T-cell (primary cell): ENCODE measurements at regions of chr14 and their contacts with region 1.

Region 1: DNA sequence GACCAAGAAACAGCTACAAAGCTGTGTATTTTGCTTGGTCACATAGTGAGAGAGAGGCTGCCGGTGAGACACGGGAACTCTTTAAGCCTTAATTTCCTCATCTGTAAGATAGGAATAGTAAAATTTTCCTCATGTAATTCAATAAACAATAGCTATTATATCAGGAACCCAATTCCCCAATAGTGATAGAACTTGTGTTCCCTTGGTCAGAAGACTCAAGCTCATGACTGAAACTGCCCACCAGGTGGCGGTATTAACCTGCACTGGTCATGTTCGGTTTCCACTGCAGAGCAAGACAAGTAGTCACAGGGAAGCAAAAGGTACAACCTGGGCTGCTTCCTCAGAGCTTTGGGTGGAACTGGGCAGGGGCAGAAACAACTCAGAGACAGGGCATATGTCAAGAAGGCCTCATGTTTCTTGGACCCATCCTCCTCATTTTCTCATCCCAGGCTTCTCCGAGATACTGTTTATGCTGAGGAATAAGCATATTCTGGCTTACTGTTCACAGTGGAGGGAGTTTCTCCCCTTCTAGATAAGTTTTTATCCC is 4.2 kb upstream of the AJUBA start:
- DNase-seq: peak; percentile 70 to 95 (median 84)
- ATAC-seq: peak; percentile 58 to 70 (median 64)
- H3K4me3 ChIP-seq: no peak overlapping the region
- H3K4me3 Mint-ChIP-seq: no peak overlapping the region
- H3K27ac ChIP-seq: no peak overlapping the region
- H3K27ac Mint-ChIP-seq: no peak overlapping the region
- H3K4me1 ChIP-seq: peaks cover 0 to 20% of the 10 kb centered on the region in 2 experiments
- H3K4me1 Mint-ChIP-seq: peaks cover 0 to 1% (median 0%) of the 10 kb centered on the region in 3 donors
- H3K27me3 ChIP-seq: peaks cover 0 to 12% of the 10 kb centered on the region in 2 experiments
- H3K27me3 Mint-ChIP-seq: no peaks in the 10 kb centered on the region

Region 2: DNA sequence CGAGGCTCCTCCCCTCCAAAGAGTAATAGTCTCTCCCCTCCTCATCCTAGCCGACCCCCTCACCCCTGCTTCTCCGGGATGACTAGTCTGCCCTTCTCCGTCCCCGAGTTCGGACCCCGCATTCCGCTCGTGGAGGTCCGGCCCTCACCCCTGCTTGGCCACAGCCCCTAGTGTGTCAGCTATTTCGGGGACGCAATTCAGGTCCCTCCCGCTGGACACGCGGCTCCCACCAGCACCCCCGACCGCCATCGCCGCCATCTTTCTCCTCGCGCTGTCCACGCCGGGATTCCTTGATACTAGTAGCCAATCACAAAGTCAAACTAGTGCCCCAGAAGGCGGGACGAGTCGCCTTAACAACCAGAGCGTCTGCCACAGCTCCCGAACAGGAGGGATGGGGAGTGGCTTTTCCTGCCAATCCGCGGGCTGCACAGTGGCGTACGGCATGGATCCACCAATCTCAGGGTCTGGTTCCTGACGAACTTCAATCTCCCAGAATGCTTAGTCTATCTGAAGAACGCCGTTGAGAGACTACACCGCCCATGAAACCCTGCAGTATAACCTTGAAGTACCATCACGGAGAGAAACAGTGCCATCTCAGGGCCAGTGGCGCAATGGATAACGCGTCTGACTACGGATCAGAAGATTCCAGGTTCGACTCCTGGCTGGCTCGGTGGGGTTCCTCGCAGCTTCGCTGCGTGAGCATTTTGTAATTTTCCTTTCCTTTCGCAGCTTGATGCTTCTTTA is 57.3 kb before region 1 on chr14 and contains the start of gene PRMT5:
- CTCF ChIA-PET with region 1: interaction called in 1 of 2 experiments, 12 read pairs
- POLR2A ChIA-PET with region 1: no interaction called
- DNase-seq: peak; percentile 93 to 100 (median 98)
- ATAC-seq: peak; percentile 95 to 97 (median 97)
- H3K4me3 ChIP-seq: peak within 1 kb of the TSS; percentile 97 to 99
- H3K4me3 Mint-ChIP-seq: no peak within 1 kb of the TSS
- H3K27ac ChIP-seq: peak within 1 kb of the TSS; percentile 89
- H3K27ac Mint-ChIP-seq: no peak within 1 kb of the TSS
- H3K4me1 ChIP-seq: peaks cover 9 to 20% of the 10 kb centered on the region in 2 experiments
- H3K4me1 Mint-ChIP-seq: peaks cover 5 to 19% (median 11%) of the 10 kb centered on the region in 3 donors
- H3K27me3 ChIP-seq: no peaks in the 10 kb centered on the region
- H3K27me3 Mint-ChIP-seq: no peaks in the 10 kb centered on the region
- total RNA-seq, gene PRMT5: 17.7 to 45.3 (median 37.5) TPM

Region 3: GRCh38 chr14:23000860-23001259 is 14.3 kb after region 1 on chr14:
- CTCF ChIA-PET with region 1: interaction called, 4 to 47 read pairs
- POLR2A ChIA-PET with region 1: interaction called, 4 to 5 read pairs
- DNase-seq: no peak
- ATAC-seq: no peak
- H3K4me3 ChIP-seq: no peak overlapping the region
- H3K4me3 Mint-ChIP-seq: no peak overlapping the region
- H3K27ac ChIP-seq: no peak overlapping the region
- H3K27ac Mint-ChIP-seq: no peak overlapping the region
- H3K4me1 ChIP-seq: no peaks in the 10 kb centered on the region
- H3K4me1 Mint-ChIP-seq: peaks cover under 1 to 6% (median 2%) of the 10 kb centered on the region in 3 donors
- H3K27me3 ChIP-seq: no peaks in the 10 kb centered on the region
- H3K27me3 Mint-ChIP-seq: no peaks in the 10 kb centered on the region

Region 4: GRCh38 chr14:23020143-23021128 is 33.9 kb after region 1 on chr14:
- CTCF ChIA-PET with region 1: interaction called, 4 to 11 read pairs
- POLR2A ChIA-PET with region 1: no interaction called
- DNase-seq: peak in 4 of 35 experiments; percentile 11 to 45 (median 31)
- ATAC-seq: peak; percentile 67 to 85 (median 68)
- H3K4me3 ChIP-seq: peak overlapping the region in 1 of 2 donors; percentile 2
- H3K4me3 Mint-ChIP-seq: peak overlapping the region; percentile 71 to 76 (median 71)
- H3K27ac ChIP-seq: no peak overlapping the region
- H3K27ac Mint-ChIP-seq: peak overlapping the region; percentile 83 to 95
- H3K4me1 ChIP-seq: peaks cover 28 to 38% of the 10 kb centered on the region in 2 experiments
- H3K4me1 Mint-ChIP-seq: peaks cover 43 to 55% (median 45%) of the 10 kb centered on the region in 3 donors
- H3K27me3 ChIP-seq: no peaks in the 10 kb centered on the region
- H3K27me3 Mint-ChIP-seq: no peaks in the 10 kb centered on the region

Region 5: DNA sequence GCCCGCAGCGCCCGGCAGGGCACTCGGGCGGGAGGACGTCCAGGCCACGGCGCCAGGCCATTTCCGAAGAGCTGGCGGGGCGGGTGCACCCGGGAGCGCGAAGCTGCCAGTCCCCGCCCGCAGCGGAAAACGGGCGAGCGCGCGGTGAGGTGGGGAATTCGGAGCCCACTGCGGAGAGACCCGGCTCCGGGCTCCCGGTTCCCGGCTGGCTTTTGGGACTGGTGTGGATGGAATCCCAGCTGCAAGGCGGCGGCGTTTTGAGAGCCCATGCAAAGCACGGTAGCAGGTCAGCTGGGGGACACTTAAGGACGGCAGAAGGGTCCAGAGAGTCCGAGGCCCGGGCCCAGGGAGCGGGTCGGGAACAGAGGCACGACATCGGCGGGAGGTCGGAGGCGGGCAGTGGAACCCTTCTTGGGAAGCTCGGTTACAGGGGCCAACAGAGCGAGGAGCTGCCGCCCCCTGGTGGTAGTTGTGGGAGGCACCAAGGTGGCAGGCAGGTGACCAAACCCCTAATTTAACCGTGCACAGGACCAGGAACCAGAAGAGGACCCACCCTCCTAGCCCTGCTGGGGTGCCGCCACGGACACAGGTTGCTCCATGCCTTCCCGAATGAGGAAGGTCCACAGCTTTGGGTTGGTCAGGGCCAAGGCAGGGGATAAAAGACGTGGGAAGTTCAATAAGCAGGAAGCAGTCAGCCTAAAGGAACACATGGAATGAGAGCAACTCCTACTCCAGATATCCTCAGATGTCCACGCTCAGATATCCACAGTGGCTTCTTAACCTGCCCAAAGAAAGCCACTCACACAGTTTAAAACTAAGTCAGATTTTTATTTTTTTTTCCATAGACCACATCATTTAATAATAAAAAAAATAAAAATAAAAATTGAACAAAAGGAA is 71.4 kb after region 1 on chr14:
- CTCF ChIA-PET with region 1: interaction called, 16 to 140 read pairs
- POLR2A ChIA-PET with region 1: interaction called, 4 read pairs
- DNase-seq: peak; percentile 61 to 93 (median 80)
- ATAC-seq: peak; percentile 71 to 77 (median 72)
- H3K4me3 ChIP-seq: peak overlapping the region; percentile 77 to 86
- H3K4me3 Mint-ChIP-seq: peak overlapping the region; percentile 82 to 84 (median 84)
- H3K27ac ChIP-seq: no peak overlapping the region
- H3K27ac Mint-ChIP-seq: peak overlapping the region; percentile 70 to 81
- H3K4me1 ChIP-seq: peaks cover 6 to 20% of the 10 kb centered on the region in 2 experiments
- H3K4me1 Mint-ChIP-seq: peaks cover 14 to 21% (median 17%) of the 10 kb centered on the region in 3 donors
- H3K27me3 ChIP-seq: peaks cover 0 to 6% of the 10 kb centered on the region in 2 experiments
- H3K27me3 Mint-ChIP-seq: no peaks in the 10 kb centered on the region